MCF 10A (cell line): ENCODE measurements at regions of chr10 and their contacts with region 1.

Region 1: GRCh38 chr10:35195361-35196306 is 69.0 kb downstream of the CREM start:
- DNase-seq: peak; percentile 82
- H3K4me3 Mint-ChIP-seq: peak overlapping the region; percentile 76
- H3K27ac Mint-ChIP-seq: peak overlapping the region; percentile 92
- H3K4me1 Mint-ChIP-seq: peaks cover 14% of the 10 kb centered on the region
- H3K27me3 Mint-ChIP-seq: no peaks in the 10 kb centered on the region
- CTCF ChIP-seq: peak; percentile 80

Region 2: GRCh38 chr10:35126530-35127296 is 68.9 kb before region 1 on chr10 and contains the start of gene CREM:
- CTCF ChIA-PET with region 1: interaction called, 32 read pairs
- POLR2A ChIA-PET with region 1: interaction called, 45 read pairs
- intact Hi-C with region 1: loop called (anchors 1 kb)
- DNase-seq: peak; percentile 98
- H3K4me3 Mint-ChIP-seq: peak within 1 kb of the TSS; percentile 82
- H3K27ac Mint-ChIP-seq: peak within 1 kb of the TSS; percentile 97
- H3K4me1 Mint-ChIP-seq: peaks cover 6% of the 10 kb centered on the region
- H3K27me3 Mint-ChIP-seq: no peaks in the 10 kb centered on the region
- CTCF ChIP-seq: peak; percentile 86
- total RNA-seq, gene CREM: 30.2 and 31.3 TPM in 2 replicates

Region 3: DNA sequence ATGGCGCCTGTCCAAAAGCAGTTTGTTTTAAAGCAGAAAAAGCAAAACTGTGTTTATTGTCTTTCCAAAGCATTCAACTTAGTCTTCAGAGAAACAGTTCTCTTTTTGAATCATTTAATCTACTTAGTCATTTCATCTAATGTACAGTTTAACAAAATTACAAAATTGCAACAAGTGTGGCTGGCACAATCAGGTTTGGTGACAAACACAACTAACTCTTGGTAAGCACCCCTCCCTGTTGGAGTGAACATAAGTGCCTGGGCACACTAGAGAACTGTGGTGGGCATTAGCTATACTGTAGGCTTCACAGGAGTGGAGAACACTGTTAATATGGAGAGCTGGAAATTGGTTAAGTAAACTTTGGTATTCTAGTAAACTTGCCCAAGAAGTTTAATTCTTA is 62.0 kb before region 1 on chr10:
- CTCF ChIA-PET with region 1: interaction called, 32 read pairs
- POLR2A ChIA-PET with region 1: interaction called, 45 read pairs
- intact Hi-C with region 1: no loop called
- DNase-seq: no peak
- H3K4me3 Mint-ChIP-seq: no peak overlapping the region
- H3K27ac Mint-ChIP-seq: no peak overlapping the region
- H3K4me1 Mint-ChIP-seq: no peaks in the 10 kb centered on the region
- H3K27me3 Mint-ChIP-seq: no peaks in the 10 kb centered on the region
- CTCF ChIP-seq: no peak

Region 4: GRCh38 chr10:35178331-35178730 is 17.3 kb before region 1 on chr10:
- CTCF ChIA-PET with region 1: interaction called, 15 read pairs
- POLR2A ChIA-PET with region 1: interaction called, 4 read pairs
- intact Hi-C with region 1: no loop called
- DNase-seq: no peak
- H3K4me3 Mint-ChIP-seq: no peak overlapping the region
- H3K27ac Mint-ChIP-seq: no peak overlapping the region
- H3K4me1 Mint-ChIP-seq: no peaks in the 10 kb centered on the region
- H3K27me3 Mint-ChIP-seq: no peaks in the 10 kb centered on the region
- CTCF ChIP-seq: no peak

Region 5: GRCh38 chr10:35184527-35185171 is 11.0 kb before region 1 on chr10:
- CTCF ChIA-PET with region 1: interaction called, 15 read pairs
- POLR2A ChIA-PET with region 1: interaction called, 11 read pairs
- intact Hi-C with region 1: no loop called
- DNase-seq: no peak
- H3K4me3 Mint-ChIP-seq: no peak overlapping the region
- H3K27ac Mint-ChIP-seq: no peak overlapping the region
- H3K4me1 Mint-ChIP-seq: no peaks in the 10 kb centered on the region
- H3K27me3 Mint-ChIP-seq: no peaks in the 10 kb centered on the region
- CTCF ChIP-seq: no peak

Region 6: DNA sequence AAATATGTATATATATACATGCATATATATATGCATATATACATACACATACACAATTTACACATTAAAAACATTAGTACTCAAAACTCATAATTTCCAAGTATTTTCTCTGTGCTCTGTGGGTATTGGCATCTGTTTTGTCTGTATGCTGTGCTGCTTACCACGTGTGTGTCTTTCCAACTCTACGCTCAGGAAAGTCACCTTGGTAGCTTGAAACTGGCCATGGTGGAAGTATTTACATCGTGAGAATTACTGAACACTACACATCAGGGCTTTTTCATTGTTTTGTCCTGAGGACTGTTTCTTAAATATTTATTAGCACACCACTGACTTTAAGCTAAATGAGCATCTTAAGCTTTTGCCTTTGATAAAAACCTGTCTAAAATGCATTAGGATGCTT is 10.6 kb after region 1 on chr10:
- CTCF ChIA-PET with region 1: interaction called, 11 read pairs
- POLR2A ChIA-PET with region 1: interaction called, 5 read pairs
- intact Hi-C with region 1: no loop called
- DNase-seq: no peak
- H3K4me3 Mint-ChIP-seq: no peak overlapping the region
- H3K27ac Mint-ChIP-seq: no peak overlapping the region
- H3K4me1 Mint-ChIP-seq: no peaks in the 10 kb centered on the region
- H3K27me3 Mint-ChIP-seq: no peaks in the 10 kb centered on the region
- CTCF ChIP-seq: no peak